Calu3 (cell line): ENCODE measurements at regions of chr16 and their contacts with region 1.

Region 1: DNA sequence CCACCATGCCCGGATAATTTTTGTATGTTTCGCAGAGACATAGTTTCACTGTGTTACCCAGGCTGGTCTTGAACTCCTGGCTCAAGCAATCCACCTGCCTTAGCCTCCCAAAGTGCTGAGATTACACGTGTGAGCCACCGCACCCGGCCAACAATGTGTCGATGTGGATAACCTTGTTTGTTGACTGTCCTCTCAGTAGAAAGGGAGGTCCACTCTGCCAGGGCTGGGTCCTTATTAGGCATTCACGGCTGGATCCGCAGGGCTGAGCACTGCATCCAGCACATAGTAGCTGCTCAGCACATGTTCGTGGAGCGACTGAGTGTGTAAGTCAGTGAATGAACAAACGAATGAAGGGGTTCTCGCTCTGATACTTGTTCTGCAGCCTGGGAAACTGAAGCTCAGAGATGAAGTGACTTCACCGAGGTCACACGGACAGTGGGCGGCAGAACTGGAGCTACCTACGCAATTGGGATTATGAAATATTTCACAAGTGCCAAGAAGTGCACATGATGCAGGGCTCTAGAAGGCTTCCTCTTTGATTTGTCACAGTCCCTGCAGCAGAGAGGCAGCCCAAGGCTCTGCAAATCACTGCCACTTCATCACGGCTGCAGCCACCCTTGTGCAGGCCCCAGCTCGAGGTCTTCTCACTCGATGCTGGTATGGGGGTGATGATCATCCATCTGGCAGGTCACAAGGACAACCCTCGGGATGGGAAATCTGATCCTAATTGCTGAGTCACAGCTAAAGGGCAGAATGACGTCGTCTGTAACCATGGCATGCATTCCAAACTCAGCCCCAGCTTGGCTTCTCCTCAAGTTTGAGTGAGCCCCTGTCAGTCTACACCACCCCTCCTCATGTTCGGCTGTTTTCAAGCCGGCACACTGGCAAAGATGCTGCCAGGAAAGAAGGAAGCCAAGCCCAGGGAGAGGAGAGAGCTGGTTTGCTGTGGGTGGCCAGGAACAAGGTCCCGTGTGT is 28.0 kb upstream of the SNN start:
- DNase-seq: peak; percentile 87
- H3K4me3 Mint-ChIP-seq: peak overlapping the region; percentile 44
- H3K27ac Mint-ChIP-seq: peak overlapping the region; percentile 99
- H3K4me1 Mint-ChIP-seq: peaks cover 57% of the 10 kb centered on the region
- H3K27me3 Mint-ChIP-seq: no peaks in the 10 kb centered on the region
- CTCF ChIP-seq: no peak

Region 2: GRCh38 chr16:11396241-11397048 is 243.8 kb before region 1 on chr16:
- CTCF ChIA-PET with region 1: interaction called, 5 read pairs
- intact Hi-C with region 1: loop called (anchors 2 kb)
- DNase-seq: peak; percentile 88
- H3K4me3 Mint-ChIP-seq: no peak overlapping the region
- H3K27ac Mint-ChIP-seq: no peak overlapping the region
- H3K4me1 Mint-ChIP-seq: peaks cover 9% of the 10 kb centered on the region
- H3K27me3 Mint-ChIP-seq: peaks cover 17% of the 10 kb centered on the region
- CTCF ChIP-seq: peak; percentile 99

Region 3: DNA sequence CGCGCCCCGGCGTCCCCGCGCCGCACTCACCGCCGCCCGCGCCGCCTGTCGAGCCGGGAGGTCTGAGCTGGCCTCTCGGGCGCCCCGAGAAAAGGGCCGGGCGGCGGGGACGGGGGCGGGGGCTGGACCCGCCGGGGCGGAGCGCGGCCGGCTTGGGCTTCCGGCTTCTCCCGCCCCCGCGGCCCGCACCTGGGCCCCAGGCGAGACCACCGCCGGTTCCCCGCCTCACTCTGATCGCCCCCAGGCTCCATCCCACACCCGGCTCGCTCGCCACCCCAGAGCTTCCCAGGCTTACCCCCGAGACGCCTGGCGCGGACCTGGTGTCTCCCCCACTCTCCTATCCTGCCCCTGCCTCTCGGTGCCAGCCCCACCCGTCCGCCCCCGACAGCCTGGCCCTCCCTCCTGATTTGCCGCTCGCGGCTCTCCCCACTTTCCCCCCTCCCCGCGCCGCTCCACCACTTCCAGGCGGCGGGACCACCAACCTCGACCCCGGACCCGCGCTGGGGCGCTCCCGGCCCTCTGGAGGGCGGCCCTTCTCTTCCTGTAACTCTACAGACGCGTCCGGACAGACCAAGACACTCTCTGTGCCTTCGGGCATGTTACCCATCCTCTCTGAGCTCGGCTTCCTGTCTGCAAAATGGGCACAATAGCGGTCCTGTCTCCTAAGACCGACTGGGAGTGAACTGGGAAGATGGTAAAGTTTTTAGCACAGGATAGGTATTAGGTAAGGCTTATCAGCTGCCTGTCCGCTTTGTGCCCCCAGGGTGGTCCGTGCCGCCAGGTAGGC is 53.2 kb before region 1 on chr16 and contains the start of gene LITAF:
- CTCF ChIA-PET with region 1: interaction called, 20 read pairs
- intact Hi-C with region 1: loop called (anchors 1 kb)
- DNase-seq: peak; percentile 80
- H3K4me3 Mint-ChIP-seq: peak within 1 kb of the TSS; percentile 77
- H3K27ac Mint-ChIP-seq: peak within 1 kb of the TSS; percentile 98
- H3K4me1 Mint-ChIP-seq: peaks cover 33% of the 10 kb centered on the region
- H3K27me3 Mint-ChIP-seq: no peaks in the 10 kb centered on the region
- CTCF ChIP-seq: no peak
- total RNA-seq, gene LITAF: 328 and 443 TPM in 2 replicates

Region 4: GRCh38 chr16:11613381-11614303 is 26.6 kb before region 1 on chr16:
- CTCF ChIA-PET with region 1: interaction called, 11 read pairs
- intact Hi-C with region 1: loop called (anchors 1 kb)
- DNase-seq: peak; percentile 81
- H3K4me3 Mint-ChIP-seq: peak overlapping the region; percentile 52
- H3K27ac Mint-ChIP-seq: peak overlapping the region; percentile 80
- H3K4me1 Mint-ChIP-seq: peaks cover 82% of the 10 kb centered on the region
- H3K27me3 Mint-ChIP-seq: no peaks in the 10 kb centered on the region
- CTCF ChIP-seq: no peak

Region 5: GRCh38 chr16:11669380-11670146 is 29.4 kb after region 1 on chr16:
- CTCF ChIA-PET with region 1: interaction called, 10 read pairs
- intact Hi-C with region 1: no loop called
- DNase-seq: no peak
- H3K4me3 Mint-ChIP-seq: peak overlapping the region; percentile 61
- H3K27ac Mint-ChIP-seq: no peak overlapping the region
- H3K4me1 Mint-ChIP-seq: peaks cover 39% of the 10 kb centered on the region
- H3K27me3 Mint-ChIP-seq: no peaks in the 10 kb centered on the region
- CTCF ChIP-seq: no peak